Head of caudate nucleus (tissue), 42 donors: ENCODE measurements at regions of chr5 and their contacts with region 1.

Region 1: DNA sequence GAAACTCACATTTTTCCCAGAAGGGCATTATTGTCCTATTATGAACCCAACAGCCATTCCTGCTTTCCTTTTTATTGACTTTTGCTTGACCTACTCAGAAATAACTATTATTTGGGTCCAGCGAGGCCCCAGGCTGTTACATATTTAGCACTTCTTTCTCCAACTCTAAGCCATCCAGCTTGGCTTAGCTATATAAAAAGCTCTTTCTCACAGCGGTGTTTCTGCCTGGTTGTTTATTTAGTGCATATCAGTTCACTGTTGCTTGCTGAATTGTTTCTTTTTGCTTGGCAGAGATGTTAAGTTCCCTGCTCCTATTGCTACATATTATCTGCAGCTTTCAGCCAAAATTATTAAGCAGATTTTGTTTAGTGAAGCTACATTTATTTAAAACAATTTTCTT is 1156.8 kb upstream of the SEMA6A start:
- DNase-seq: no peak

Region 2: DNA sequence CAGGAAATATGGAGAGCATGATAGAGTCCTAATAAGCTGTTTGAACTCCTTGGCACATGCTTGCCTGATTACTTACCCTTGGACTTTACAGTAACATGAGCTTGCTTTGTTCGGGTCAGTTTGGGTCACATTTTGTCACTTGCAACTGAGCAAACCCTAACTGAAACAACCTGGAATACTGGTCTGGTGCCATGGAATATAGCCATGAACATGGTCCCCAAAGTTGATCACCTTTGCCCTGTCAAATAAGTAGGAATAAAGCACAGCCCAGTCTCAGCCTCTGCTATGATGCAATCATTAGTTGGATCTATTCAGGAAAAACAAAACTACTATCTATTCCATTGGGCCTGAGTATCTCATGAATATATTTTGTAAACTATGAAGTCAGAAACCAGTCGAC is 1933.2 kb before region 1 on chr5:
- intact Hi-C with region 1: loop called (anchors 10 kb)
- DNase-seq: no peak